CD4-positive, alpha-beta memory T cell (primary cell): ENCODE measurements at regions of chr17 and their contacts with region 1.

Region 1: DNA sequence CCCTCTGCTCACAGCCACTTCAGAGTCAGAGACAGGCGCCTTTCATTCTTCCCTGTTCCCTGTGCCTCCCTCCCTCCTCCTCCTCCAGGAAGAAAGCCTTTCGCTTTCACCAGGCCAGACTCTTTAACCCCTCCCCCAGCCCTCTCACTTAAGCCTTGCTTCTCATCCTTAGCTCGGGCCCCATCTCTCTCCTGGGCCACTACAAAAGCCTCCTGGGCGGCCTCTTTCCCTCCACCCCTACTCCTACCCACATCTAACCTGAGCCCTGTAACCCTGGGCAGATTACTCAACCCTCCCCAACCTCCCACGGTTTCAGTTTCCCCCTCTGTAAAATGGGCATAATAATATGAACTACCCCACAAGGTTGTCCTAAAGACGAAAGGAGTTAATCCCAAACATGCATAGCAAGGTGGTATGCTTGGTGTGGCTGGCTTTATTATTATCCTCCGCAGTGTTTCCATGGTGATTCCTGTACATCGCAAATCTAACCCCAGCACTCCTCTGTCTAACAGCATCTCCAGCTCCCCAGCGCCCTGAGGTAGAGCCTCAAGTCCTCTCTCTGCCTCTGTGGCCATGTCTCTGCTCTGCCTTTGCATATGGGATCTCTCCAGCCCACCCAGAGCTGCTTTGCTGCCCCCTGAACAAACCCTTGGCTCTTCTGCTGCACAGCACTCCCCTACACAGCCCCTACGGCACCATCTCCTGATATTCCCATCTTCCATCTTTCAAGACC is 17.7 kb downstream of the PIMREG start:
- DNase-seq: no peak
- H3K4me3 ChIP-seq: no peak overlapping the region
- H3K4me3 Mint-ChIP-seq: no peak overlapping the region
- H3K27ac ChIP-seq: no peak overlapping the region
- H3K27ac Mint-ChIP-seq: peak overlapping the region in 2 of 7 donors; percentile 37 to 53
- H3K4me1 ChIP-seq: no peaks in the 10 kb centered on the region
- H3K4me1 Mint-ChIP-seq: peaks cover 2 to 8% (median 3%) of the 10 kb centered on the region in 4 donors
- H3K27me3 ChIP-seq: no peaks in the 10 kb centered on the region
- H3K27me3 Mint-ChIP-seq: peaks cover 0 to 3% of the 10 kb centered on the region in 2 donors

Region 2: DNA sequence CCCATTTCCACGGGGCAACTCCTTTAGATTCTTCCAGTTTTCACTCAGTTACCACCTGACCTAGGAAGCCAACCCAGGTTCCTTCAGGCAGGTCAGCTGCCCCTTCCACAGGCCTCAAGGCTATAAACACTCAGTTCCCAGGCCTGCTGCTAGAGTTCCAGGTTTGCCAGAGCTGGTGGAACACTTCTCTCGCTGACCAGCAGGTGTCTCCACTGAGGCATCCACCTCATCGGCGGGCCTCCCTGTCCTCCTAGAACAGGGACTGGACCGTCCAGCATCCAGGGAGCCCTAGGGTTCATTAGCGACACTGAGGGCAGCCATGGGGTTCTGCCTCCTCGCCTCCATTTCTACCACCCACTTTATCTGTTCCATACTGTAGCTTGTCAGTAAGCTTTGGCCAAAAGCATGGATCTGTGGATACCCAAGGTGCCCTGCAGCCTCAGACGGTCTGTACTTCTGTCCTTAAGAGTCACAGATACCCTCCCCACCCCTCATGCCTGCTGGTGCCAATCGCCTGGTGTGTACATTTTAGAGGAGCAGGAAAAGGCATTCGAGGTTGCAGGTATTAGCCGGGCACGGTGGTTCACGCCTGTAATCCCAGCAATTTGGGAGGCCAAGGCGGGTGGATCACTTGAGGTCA is 11.3 kb after region 1 on chr17:
- CTCF ChIA-PET with region 1: interaction called, 17 read pairs
- POLR2A ChIA-PET with region 1: no interaction called
- intact Hi-C with region 1: no loop called
- DNase-seq: peak; percentile 49 to 58 (median 52)
- H3K4me3 ChIP-seq: no peak overlapping the region
- H3K4me3 Mint-ChIP-seq: no peak overlapping the region
- H3K27ac ChIP-seq: no peak overlapping the region
- H3K27ac Mint-ChIP-seq: peak overlapping the region in 3 of 7 donors; percentile 29 to 87 (median 57)
- H3K4me1 ChIP-seq: no peaks in the 10 kb centered on the region
- H3K4me1 Mint-ChIP-seq: peaks cover 0 to 4% (median under 1%) of the 10 kb centered on the region in 4 donors
- H3K27me3 ChIP-seq: no peaks in the 10 kb centered on the region
- H3K27me3 Mint-ChIP-seq: peaks cover 0 to 6% of the 10 kb centered on the region in 2 donors